Common myeloid progenitor, CD34-positive (primary cell): ENCODE measurements at regions of chr1 and their contacts with region 1.

Region 1: GRCh38 chr1:203593723-203594122 is 32.9 kb upstream of the ATP2B4 start:
- DNase-seq: peak; percentile 53 to 78 (median 72)
- H3K4me3 ChIP-seq: no peak overlapping the region
- H3K27ac ChIP-seq: no peak overlapping the region
- H3K4me1 ChIP-seq: peaks cover 0 to 5% (median 0%) of the 10 kb centered on the region in 4 experiments
- H3K27me3 ChIP-seq: peaks cover 0 to 2% (median 0%) of the 10 kb centered on the region in 5 experiments

Region 2: DNA sequence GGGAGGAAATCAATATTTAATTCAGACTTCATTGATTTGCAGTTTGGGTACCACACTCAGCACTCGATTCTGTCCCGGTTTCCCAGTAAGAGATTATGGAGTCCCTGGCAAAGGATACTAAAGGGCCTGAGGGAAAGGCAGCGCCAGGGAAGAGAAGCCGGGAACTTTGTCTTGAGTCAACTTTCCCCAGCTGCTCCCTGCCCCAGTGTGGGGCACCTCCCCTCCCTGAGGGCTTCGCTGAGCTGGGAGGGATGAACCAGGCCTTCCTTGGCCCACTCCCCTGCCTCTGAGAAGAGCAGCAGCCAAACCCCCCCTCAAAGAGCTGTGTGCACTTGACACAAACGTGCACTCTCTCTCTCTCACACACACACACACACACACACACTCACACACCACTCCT is 67.2 kb before region 1 on chr1:
- CTCF ChIA-PET with region 1: no interaction called
- POLR2A ChIA-PET with region 1: no interaction called
- DNase-seq: no peak
- H3K4me3 ChIP-seq: no peak overlapping the region
- H3K27ac ChIP-seq: no peak overlapping the region
- H3K4me1 ChIP-seq: peaks cover 0 to 3% (median 0%) of the 10 kb centered on the region in 4 experiments
- H3K27me3 ChIP-seq: no peaks in the 10 kb centered on the region

Region 3: GRCh38 chr1:203612932-203613682 is 19.4 kb after region 1 on chr1:
- CTCF ChIA-PET with region 1: interaction called, 98 read pairs
- POLR2A ChIA-PET with region 1: no interaction called
- DNase-seq: peak; percentile 43 to 91 (median 84)
- H3K4me3 ChIP-seq: peak overlapping the region in 2 of 7 experiments; percentile 11 to 19
- H3K27ac ChIP-seq: no peak overlapping the region
- H3K4me1 ChIP-seq: peaks cover 6 to 31% (median 31%) of the 10 kb centered on the region in 4 experiments
- H3K27me3 ChIP-seq: no peaks in the 10 kb centered on the region

Region 4: GRCh38 chr1:203619091-203619780 is 25.5 kb after region 1 on chr1:
- CTCF ChIA-PET with region 1: interaction called, 12 read pairs
- POLR2A ChIA-PET with region 1: no interaction called
- DNase-seq: no peak
- H3K4me3 ChIP-seq: no peak overlapping the region
- H3K27ac ChIP-seq: no peak overlapping the region
- H3K4me1 ChIP-seq: peaks cover 0 to 18% (median 8%) of the 10 kb centered on the region in 4 experiments
- H3K27me3 ChIP-seq: no peaks in the 10 kb centered on the region